A673 (cell line): ENCODE measurements at regions of chr3 and their contacts with region 1.

Region 1: DNA sequence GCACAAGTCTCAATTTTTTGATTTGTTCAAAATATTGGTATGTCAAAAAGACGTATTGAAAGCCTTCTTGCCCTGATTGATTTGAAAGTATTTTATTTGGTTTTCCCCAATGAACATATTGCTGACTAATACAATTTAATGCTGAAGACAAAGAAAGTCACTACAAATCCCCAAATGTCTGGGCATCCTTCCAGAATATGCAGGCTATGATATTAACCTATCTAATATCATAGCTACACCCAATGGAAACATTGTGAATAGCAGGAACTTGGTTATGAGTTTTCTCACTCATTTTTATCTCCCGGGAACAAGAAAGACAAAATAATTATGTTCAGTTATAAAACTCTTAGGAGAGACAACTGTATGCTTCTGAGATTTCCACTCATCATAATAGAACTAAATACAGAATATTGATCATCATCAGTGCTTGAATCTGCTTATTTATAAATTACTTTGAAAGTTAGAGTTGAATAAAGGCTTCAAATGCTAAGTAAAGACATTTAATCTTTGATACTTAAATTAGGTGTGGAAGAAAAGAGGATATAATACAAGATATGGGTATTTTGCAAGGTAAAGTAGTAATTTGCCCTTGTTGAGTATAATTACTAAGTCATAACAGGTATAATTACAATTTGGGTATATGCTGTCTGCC is 483.9 kb downstream of the RBMS3 start:
- DNase-seq: peak; percentile 92
- H3K4me3 ChIP-seq: no peak overlapping the region
- H3K27ac ChIP-seq: no peak overlapping the region
- H3K4me1 ChIP-seq: peaks cover 47% of the 10 kb centered on the region
- H3K27me3 ChIP-seq: no peaks in the 10 kb centered on the region
- CTCF ChIP-seq: peak; percentile 75

Region 2: DNA sequence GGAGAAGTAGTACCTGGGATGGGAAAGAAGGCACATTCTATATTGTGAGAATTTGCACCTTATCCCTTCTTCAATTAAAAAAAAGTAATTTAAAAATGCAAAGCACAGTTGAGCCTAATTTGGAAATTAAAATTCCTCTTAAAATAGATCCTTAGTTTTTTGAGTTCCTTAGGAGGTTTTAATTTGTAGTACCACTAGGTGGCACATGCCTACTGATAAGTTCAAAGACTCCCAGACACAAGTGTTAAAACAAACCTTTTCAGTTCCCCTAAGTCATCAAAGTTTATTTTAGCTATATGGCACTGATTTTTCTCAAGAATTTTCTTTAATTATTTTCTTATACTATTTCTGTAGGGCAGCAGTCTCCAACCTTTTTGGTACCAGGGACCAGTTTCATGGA is 1288.5 kb before region 1 on chr3:
- CTCF ChIA-PET with region 1: no interaction called
- POLR2A ChIA-PET with region 1: no interaction called
- intact Hi-C with region 1: loop called (anchors 10 kb)
- DNase-seq: peak; percentile 54
- H3K4me3 ChIP-seq: no peak overlapping the region
- H3K27ac ChIP-seq: no peak overlapping the region
- H3K4me1 ChIP-seq: no peaks in the 10 kb centered on the region
- H3K27me3 ChIP-seq: no peaks in the 10 kb centered on the region
- CTCF ChIP-seq: peak; percentile 69

Region 3: GRCh38 chr3:28853830-28854229 is 910.9 kb before region 1 on chr3:
- CTCF ChIA-PET with region 1: no interaction called
- POLR2A ChIA-PET with region 1: no interaction called
- intact Hi-C with region 1: loop called (anchors 10 kb)
- DNase-seq: peak; percentile 31
- H3K4me3 ChIP-seq: no peak overlapping the region
- H3K27ac ChIP-seq: no peak overlapping the region
- H3K4me1 ChIP-seq: peaks cover 3% of the 10 kb centered on the region
- H3K27me3 ChIP-seq: no peaks in the 10 kb centered on the region
- CTCF ChIP-seq: no peak; the same call in 1 of the 2 replicates

Region 4: GRCh38 chr3:29144807-29145206 is 619.9 kb before region 1 on chr3:
- CTCF ChIA-PET with region 1: interaction called, 7 read pairs
- POLR2A ChIA-PET with region 1: no interaction called
- intact Hi-C with region 1: loop called (anchors 5 kb)
- DNase-seq: peak; percentile 86
- H3K4me3 ChIP-seq: no peak overlapping the region
- H3K27ac ChIP-seq: no peak overlapping the region
- H3K4me1 ChIP-seq: peaks cover 21% of the 10 kb centered on the region
- H3K27me3 ChIP-seq: no peaks in the 10 kb centered on the region
- CTCF ChIP-seq: peak; percentile 62

Region 5: DNA sequence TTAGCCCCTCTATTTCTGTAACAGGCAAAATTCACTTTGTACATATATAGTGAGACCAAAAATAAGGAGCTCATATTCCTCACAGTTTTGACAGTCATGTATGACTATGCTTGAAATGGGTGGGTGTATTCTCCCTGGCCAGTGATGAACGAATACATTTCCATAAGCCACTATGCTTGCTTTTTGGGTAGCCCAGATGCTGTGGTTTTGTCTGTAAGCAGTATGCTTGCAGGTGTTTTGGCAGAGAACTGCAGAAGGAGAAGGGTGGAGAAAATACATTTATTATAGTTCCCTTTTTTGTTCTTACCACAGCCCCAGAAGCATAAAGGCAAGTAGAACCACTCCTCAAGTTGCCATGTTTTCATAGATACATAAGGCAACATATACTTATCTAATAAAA is 352.6 kb before region 1 on chr3:
- CTCF ChIA-PET with region 1: no interaction called
- POLR2A ChIA-PET with region 1: no interaction called
- intact Hi-C with region 1: loop called (anchors 10 kb)
- DNase-seq: no peak
- H3K4me3 ChIP-seq: no peak overlapping the region
- H3K27ac ChIP-seq: no peak overlapping the region
- H3K4me1 ChIP-seq: peaks cover 38% of the 10 kb centered on the region
- H3K27me3 ChIP-seq: no peaks in the 10 kb centered on the region
- CTCF ChIP-seq: no peak